ENCODE measurements at regions of chr7 and their contacts with region 1.

Region 1: DNA sequence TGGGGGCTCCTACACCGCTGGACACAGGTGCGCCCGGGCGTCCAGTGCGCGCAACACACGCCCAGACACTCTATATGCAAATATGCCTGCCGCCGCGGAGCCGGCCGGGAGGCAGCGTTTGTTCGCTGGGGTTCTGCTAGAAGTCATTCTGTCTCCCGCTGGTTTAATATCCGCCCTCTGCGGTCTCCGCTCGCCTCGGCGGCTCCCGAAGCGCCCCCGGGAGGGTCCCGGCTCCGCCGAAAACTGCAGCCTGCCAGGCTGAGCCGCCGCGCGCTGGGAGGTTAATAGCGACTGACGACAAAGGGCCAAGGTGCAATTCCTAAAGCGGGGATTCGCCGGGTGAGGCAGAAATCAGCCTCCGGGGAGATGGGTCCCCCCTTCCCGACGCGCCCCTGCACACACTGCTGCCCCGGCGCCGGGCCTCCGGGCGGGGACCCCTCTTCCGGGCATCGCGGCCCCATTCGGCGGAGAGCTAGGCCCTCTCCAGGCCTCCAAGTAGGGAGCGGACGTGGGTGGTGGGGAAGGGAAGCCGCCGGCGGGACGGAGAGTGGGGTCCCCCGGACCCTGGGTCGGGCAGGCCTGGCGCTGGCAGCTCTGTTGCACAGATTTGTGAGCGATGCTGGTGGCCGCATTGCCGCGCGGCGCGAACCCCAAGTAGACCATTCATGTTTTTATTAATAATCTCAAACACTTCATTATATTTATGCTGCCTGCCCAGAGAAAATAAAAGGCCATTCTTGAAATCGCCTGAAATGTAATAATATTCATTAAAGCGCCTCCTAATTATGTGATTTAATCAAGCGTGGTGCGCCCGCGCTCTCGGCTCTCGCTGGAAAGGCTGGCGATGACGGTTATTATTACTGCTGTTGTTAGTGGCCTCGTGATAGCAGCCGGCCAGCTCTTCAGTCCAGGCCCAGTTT is 9.1 kb downstream of the EN2 start:
- DNase-seq: peak; percentile 6
- H3K4me3 Mint-ChIP-seq: no peak overlapping the region
- H3K27ac Mint-ChIP-seq: peak overlapping the region; percentile 44
- H3K4me1 Mint-ChIP-seq: no peaks in the 10 kb centered on the region
- H3K27me3 Mint-ChIP-seq: peaks cover 87% of the 10 kb centered on the region

Region 2: GRCh38 chr7:155141562-155141961 is 325.5 kb before region 1 on chr7:
- intact Hi-C with region 1: no loop called
- DNase-seq: no peak
- H3K4me3 Mint-ChIP-seq: no peak overlapping the region
- H3K27ac Mint-ChIP-seq: no peak overlapping the region
- H3K4me1 Mint-ChIP-seq: no peaks in the 10 kb centered on the region
- H3K27me3 Mint-ChIP-seq: peaks cover 17% of the 10 kb centered on the region

Region 3: DNA sequence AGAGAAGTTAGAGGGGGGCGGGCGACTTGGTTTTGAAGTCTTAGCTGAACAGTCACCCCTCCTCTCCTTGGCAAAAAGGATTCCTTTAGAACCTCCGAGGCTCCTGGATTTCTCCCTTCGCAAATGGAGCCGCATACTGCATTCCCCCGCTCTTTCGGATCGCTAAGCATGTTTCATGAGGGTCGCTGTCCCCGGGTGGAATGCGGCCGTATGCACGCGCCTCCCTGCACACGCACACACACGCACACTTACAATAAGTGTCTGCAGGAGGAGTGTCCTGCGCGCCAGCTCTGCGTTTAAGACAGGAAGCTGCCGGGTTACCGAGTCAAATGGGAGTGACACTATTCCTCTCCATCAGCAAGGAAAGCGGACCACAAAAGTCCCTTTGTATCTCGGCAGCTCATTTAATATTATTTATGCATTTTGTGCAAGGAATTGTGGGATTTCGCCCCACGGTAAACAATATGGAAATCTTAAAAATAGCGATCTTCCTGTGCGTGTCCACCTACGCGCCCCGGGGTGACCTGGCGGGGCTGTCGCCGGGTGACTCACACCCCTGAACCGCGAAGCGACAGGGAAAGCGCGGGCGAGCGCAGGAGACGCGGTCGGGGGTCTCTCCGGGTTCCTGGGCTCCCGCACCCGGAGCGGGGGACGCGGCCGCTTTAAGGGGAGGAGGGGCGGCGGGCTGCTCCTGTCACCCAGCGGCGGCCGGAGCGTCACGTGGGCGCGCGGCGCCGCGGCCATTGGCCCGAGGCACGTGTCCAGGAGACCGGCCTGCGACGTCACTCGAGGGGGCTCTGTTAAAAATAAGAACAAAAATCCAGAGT is 10.1 kb before region 1 on chr7:
- intact Hi-C with region 1: loop called (anchors 1 kb)
- DNase-seq: no peak
- H3K4me3 Mint-ChIP-seq: peak overlapping the region; percentile 5
- H3K27ac Mint-ChIP-seq: peak overlapping the region; percentile 70
- H3K4me1 Mint-ChIP-seq: peaks cover 4% of the 10 kb centered on the region
- H3K27me3 Mint-ChIP-seq: peaks cover 68% of the 10 kb centered on the region

Region 4: DNA sequence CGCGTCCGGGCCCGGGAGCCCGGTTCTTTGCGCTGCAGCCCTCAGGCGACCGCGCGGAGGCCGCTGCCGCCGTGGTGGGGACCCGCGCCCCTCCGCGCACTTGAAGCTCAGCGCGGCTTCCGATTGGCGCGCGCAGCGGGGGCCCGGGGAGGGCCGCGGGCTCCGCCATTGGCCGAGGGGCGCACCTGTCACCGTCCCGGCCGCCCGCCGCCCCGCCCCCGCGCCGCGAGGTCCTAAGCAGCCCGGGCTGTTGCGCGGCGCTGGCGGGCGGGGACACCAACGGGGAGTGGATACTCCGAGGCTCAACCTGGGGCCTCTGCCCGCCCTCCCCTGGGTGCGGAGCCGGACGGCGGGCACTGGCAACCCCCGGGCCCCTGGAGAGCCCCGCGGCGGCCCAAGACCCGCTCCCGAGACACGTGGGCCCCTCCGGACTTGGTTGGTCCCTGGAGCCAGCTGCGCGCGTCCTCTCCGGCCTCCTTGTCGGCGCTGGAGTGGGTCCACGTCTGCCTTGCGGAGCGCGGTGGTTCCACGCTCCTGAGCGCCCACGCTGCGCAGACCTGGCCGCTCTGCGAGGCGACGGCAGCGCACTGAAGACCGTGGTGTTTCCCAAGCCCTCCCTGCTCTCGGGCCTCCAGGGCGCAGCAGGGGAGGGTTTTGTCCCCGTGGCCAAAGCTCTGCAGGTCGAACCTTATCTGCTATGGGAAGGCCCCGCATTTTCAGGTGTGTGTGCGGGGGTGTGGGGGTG is 1543.7 kb after region 1 on chr7 and contains the start of gene MNX1:
- intact Hi-C with region 1: loop called (anchors 5 kb)
- DNase-seq: peak; percentile 30
- H3K4me3 Mint-ChIP-seq: peak within 1 kb of the TSS; percentile 37
- H3K27ac Mint-ChIP-seq: peak within 1 kb of the TSS; percentile 51
- H3K4me1 Mint-ChIP-seq: peaks cover under 1% of the 10 kb centered on the region
- H3K27me3 Mint-ChIP-seq: peaks cover 79% of the 10 kb centered on the region
- total RNA-seq, gene MNX1: not detected in 2 replicates

Region 5: DNA sequence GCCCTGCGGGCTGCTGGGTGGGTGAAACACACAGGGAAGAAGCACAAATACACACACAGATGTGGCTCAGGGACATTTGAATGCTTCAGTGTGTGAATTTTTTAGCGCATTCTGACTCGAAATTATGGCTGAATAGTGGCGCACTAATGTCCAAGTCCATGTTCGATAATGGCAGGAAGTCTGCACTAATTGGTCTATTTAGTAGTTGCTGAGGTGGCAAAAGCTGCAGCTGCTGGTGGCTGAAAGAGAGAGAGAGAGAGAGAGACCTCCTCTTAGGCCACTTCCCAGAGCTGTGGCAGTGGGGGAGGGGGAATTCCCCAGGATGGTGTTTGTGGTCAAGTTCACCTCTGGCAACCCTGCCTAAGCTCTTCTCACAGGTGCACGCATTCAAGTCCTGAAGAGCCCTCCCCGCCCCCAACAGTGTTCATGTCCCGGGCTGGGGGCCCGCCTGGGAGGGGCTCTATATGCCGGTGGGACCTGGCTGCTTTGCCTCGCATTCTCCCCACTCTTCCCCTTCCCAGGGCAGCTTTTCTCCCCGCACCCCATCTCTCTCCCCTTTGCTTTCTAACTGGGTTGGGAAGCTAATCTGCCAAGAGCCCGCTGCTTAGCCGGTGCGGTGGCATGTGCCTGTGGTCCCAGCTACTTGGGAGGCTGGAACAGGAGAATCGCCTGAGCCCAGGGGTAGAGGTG is 1549.4 kb after region 1 on chr7:
- intact Hi-C with region 1: loop called (anchors 2 kb)
- DNase-seq: peak; percentile 20
- H3K4me3 Mint-ChIP-seq: no peak overlapping the region
- H3K27ac Mint-ChIP-seq: peak overlapping the region; percentile 44
- H3K4me1 Mint-ChIP-seq: peaks cover 14% of the 10 kb centered on the region
- H3K27me3 Mint-ChIP-seq: peaks cover 80% of the 10 kb centered on the region

Measured in activated T-helper 1 cell treated with anti-CD3 and anti-CD28 coated beads, Interleukin-12 subunit alpha, Interleukin-12 subunit beta, Interleukin-2, Interleukin-4 antibody, amounts not matched to agents 30 ng/mL and 10 ng/mL and 1 ng/mL, durations not matched to agents 14 hours and 24 hours and 36 hours (primary cell).